ENCODE measurements at regions of chr15 and their contacts with region 1.

Region 1: GRCh38 chr15:36883713-36884517 is 216.4 kb downstream of the MEIS2 start:
- DNase-seq: peak; percentile 26
- ATAC-seq: peak; percentile 93
- H3K4me3 ChIP-seq: no peak overlapping the region
- H3K27ac ChIP-seq: no peak overlapping the region
- H3K4me1 ChIP-seq: no peaks in the 10 kb centered on the region; the same call in 1 of the 2 replicates
- H3K27me3 ChIP-seq: peaks cover 12 to 50% of the 10 kb centered on the region in 2 experiments
- CTCF ChIP-seq: peak; percentile 75 to 93 (median 77)
- EP300 ChIP-seq: no peak
- POLR2A ChIP-seq: no peak
- RAD21 ChIP-seq: peak; percentile 93

Region 2: DNA sequence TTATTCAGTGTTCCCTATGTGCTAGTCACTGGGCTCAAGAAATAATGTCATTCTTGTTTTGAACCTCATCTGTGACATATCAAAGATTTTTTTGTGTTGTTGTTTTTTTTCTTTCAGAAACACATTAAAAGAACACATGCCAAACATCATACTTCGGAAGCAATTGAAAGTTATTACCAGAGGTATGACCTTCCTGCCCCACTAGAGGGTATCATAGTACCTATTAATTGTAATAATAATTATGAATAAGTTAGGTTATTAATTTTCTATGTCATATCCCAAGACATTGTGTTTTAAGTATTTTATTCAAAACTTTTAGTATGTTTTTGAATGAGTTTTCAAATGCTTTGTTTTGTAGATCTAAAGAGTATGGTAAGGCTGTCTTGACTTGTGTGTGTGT is 238.8 kb before region 1 on chr15:
- CTCF ChIA-PET with region 1: no interaction called
- POLR2A ChIA-PET with region 1: no interaction called
- RAD21 ChIA-PET with region 1: no interaction called
- SMC1A ChIA-PET with region 1: no interaction called
- in situ Hi-C with region 1: no loop called
- intact Hi-C with region 1: loop called (anchors 10 kb)
- DNase-seq: no peak
- ATAC-seq: no peak
- H3K4me3 ChIP-seq: no peak overlapping the region
- H3K27ac ChIP-seq: no peak overlapping the region
- H3K4me1 ChIP-seq: no peaks in the 10 kb centered on the region
- H3K27me3 ChIP-seq: no peaks in the 10 kb centered on the region
- CTCF ChIP-seq: no peak
- EP300 ChIP-seq: no peak
- POLR2A ChIP-seq: no peak
- RAD21 ChIP-seq: no peak

Region 3: GRCh38 chr15:37093480-37094332 is 209.8 kb after region 1 on chr15:
- CTCF ChIA-PET with region 1: interaction called, 11 read pairs
- POLR2A ChIA-PET with region 1: interaction called, 7 read pairs
- RAD21 ChIA-PET with region 1: interaction called, 4 read pairs
- SMC1A ChIA-PET with region 1: interaction called, 3 read pairs
- in situ Hi-C with region 1: no loop called
- intact Hi-C with region 1: no loop called
- DNase-seq: no peak
- ATAC-seq: peak; percentile 30; the same call in 2 of the 3 replicates
- H3K4me3 ChIP-seq: no peak overlapping the region
- H3K27ac ChIP-seq: no peak overlapping the region
- H3K4me1 ChIP-seq: peaks cover 13% of the 10 kb centered on the region
- H3K27me3 ChIP-seq: no peaks in the 10 kb centered on the region; a peak in 1 of 4 replicates
- CTCF ChIP-seq: no peak
- EP300 ChIP-seq: no peak
- POLR2A ChIP-seq: no peak
- RAD21 ChIP-seq: no peak

Region 4: DNA sequence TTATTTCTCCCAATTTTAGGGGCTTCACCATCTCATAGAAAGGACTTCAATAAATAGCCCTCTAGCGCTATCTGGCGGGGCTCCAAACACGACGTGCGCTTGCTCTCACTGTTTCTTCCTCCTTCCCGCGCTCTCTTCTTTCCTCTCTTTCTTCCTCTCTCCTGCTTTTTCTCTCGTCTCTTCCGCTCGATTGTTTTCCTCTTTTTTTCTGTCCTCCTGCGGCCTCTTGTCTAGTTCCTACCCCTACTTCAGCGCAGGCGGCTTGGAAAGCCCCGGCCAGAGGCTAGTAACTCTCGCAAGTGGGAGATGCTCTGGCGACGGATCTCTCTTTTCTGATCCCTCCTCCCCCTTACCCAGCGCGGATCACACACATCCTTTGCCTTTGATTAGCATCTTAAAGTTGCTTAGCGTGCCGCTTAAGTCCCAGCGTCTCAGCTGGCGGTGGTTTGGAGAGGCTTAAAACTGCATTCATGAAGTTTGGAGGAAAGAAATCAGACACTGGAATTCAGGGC is 222.6 kb after region 1 on chr15:
- CTCF ChIA-PET with region 1: interaction called, 66 read pairs
- POLR2A ChIA-PET with region 1: no interaction called
- RAD21 ChIA-PET with region 1: interaction called, 39 read pairs
- SMC1A ChIA-PET with region 1: interaction called, 130 read pairs
- in situ Hi-C with region 1: loop called (anchors 5 kb)
- intact Hi-C with region 1: loop called (anchors 1 kb)
- DNase-seq: no peak
- ATAC-seq: peak; percentile 42; the same call in 2 of the 3 replicates
- H3K4me3 ChIP-seq: no peak overlapping the region
- H3K27ac ChIP-seq: no peak overlapping the region
- H3K4me1 ChIP-seq: no peaks in the 10 kb centered on the region; the same call in 1 of the 2 replicates
- H3K27me3 ChIP-seq: peaks cover 3 to 33% of the 10 kb centered on the region in 2 experiments
- CTCF ChIP-seq: peak; percentile 54 to 78 (median 55)
- EP300 ChIP-seq: no peak
- POLR2A ChIP-seq: no peak
- RAD21 ChIP-seq: peak; percentile 74

Region 5: GRCh38 chr15:37880009-37880834 is 996.3 kb after region 1 on chr15:
- CTCF ChIA-PET with region 1: no interaction called
- POLR2A ChIA-PET with region 1: no interaction called
- RAD21 ChIA-PET with region 1: no interaction called
- SMC1A ChIA-PET with region 1: no interaction called
- in situ Hi-C with region 1: loop called (anchors 25 kb)
- intact Hi-C with region 1: loop called (anchors 5 kb)
- DNase-seq: no peak
- ATAC-seq: peak; percentile 57
- H3K4me3 ChIP-seq: no peak overlapping the region
- H3K27ac ChIP-seq: no peak overlapping the region
- H3K4me1 ChIP-seq: no peaks in the 10 kb centered on the region
- H3K27me3 ChIP-seq: no peaks in the 10 kb centered on the region
- CTCF ChIP-seq: peak; percentile 36 to 65 (median 57); a peak in 5 of 6 replicates
- EP300 ChIP-seq: no peak
- POLR2A ChIP-seq: no peak
- RAD21 ChIP-seq: peak; percentile 55